GM12878 (cell line): ENCODE measurements at regions of chr11 and their contacts with region 1.

Region 1: GRCh38 chr11:82049199-82049598 is 684.5 kb downstream of the FAM181B start:
- DNase-seq: no peak
- ATAC-seq: no peak
- H3K4me3 ChIP-seq: no peak overlapping the region
- H3K27ac ChIP-seq: no peak overlapping the region
- H3K4me1 ChIP-seq: no peaks in the 10 kb centered on the region
- H3K27me3 ChIP-seq: no peaks in the 10 kb centered on the region
- CTCF ChIP-seq: no peak
- EP300 ChIP-seq: no peak
- POLR2A ChIP-seq: no peak
- RAD21 ChIP-seq: no peak

Region 2: DNA sequence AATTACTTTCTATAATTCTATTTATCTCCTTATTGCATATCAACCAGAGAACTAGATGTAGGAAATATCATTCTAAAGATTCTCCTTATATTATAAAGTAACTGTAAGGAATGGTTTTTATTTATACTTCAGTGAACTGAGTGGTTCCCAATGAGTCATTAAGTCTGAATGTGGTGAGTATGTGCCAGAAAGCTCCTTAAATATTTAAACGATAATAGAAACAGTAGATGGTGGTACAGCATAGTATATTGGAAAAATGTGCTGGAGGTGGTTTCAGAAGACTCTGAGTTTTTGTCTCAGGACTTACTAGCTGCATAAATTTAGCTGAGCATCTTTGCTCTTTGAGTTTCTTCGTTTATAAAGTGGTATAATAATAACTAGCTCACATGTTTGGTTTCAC is 31.0 kb after region 1 on chr11:
- CTCF ChIA-PET with region 1: no interaction called
- POLR2A ChIA-PET with region 1: no interaction called
- RAD21 ChIA-PET with region 1: no interaction called
- SMC1A ChIA-PET with region 1: no interaction called
- in situ Hi-C with region 1: no loop called
- intact Hi-C with region 1: loop called (anchors 2 kb)
- DNase-seq: no peak
- ATAC-seq: no peak
- H3K4me3 ChIP-seq: no peak overlapping the region
- H3K27ac ChIP-seq: no peak overlapping the region
- H3K4me1 ChIP-seq: no peaks in the 10 kb centered on the region
- H3K27me3 ChIP-seq: no peaks in the 10 kb centered on the region
- CTCF ChIP-seq: no peak
- EP300 ChIP-seq: no peak
- POLR2A ChIP-seq: no peak
- RAD21 ChIP-seq: no peak

Region 3: GRCh38 chr11:82305123-82305522 is 255.9 kb after region 1 on chr11:
- CTCF ChIA-PET with region 1: no interaction called
- POLR2A ChIA-PET with region 1: no interaction called
- RAD21 ChIA-PET with region 1: no interaction called
- SMC1A ChIA-PET with region 1: no interaction called
- in situ Hi-C with region 1: no loop called
- intact Hi-C with region 1: no loop called
- DNase-seq: no peak
- ATAC-seq: no peak
- H3K4me3 ChIP-seq: no peak overlapping the region
- H3K27ac ChIP-seq: no peak overlapping the region
- H3K4me1 ChIP-seq: no peaks in the 10 kb centered on the region
- H3K27me3 ChIP-seq: no peaks in the 10 kb centered on the region
- CTCF ChIP-seq: no peak
- EP300 ChIP-seq: no peak
- POLR2A ChIP-seq: no peak
- RAD21 ChIP-seq: no peak